ENCODE measurements at regions of chr3 and their contacts with region 1.

Region 1: GRCh38 chr3:189967254-189967865 is 153.3 kb downstream of the P3H2 start:
- DNase-seq: peak; percentile 85
- ATAC-seq: peak; percentile 58
- H3K4me3 ChIP-seq: no peak overlapping the region
- H3K27ac ChIP-seq: no peak overlapping the region
- H3K4me1 ChIP-seq: no peaks in the 10 kb centered on the region
- H3K27me3 ChIP-seq: no peaks in the 10 kb centered on the region
- CTCF ChIP-seq: peak; percentile 89

Region 2: GRCh38 chr3:189702066-189702646 is 265.2 kb before region 1 on chr3:
- CTCF ChIA-PET with region 1: no interaction called
- POLR2A ChIA-PET with region 1: no interaction called
- intact Hi-C with region 1: no loop called
- DNase-seq: no peak
- ATAC-seq: no peak
- H3K4me3 ChIP-seq: no peak overlapping the region
- H3K27ac ChIP-seq: no peak overlapping the region
- H3K4me1 ChIP-seq: 0 out of 2 replicates have a peak, but pooled peaks cover 3% of the 10 kb centered on the region
- H3K27me3 ChIP-seq: no peaks in the 10 kb centered on the region
- CTCF ChIP-seq: no peak

Region 3: DNA sequence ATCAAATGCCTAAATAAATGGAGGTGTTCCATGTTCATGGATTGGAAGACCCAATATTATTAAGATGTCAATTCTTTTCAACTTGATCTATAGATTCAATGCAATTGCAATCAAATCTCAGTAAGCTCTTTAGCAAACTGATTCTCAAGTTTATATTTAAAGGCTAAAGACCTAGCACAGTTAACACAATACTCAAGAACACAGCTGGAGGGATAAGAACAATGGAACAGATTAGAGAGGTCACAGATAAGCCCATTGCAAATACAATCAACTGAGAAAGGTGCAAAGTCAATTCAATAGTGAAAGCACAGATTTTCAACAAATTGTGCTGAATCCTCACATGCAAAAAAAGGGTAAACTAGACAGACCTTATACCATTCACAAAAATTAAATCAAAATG is 45.6 kb before region 1 on chr3:
- CTCF ChIA-PET with region 1: no interaction called
- POLR2A ChIA-PET with region 1: no interaction called
- intact Hi-C with region 1: no loop called
- DNase-seq: no peak
- ATAC-seq: no peak
- H3K4me3 ChIP-seq: no peak overlapping the region
- H3K27ac ChIP-seq: no peak overlapping the region
- H3K4me1 ChIP-seq: peaks cover 7% of the 10 kb centered on the region
- H3K27me3 ChIP-seq: no peaks in the 10 kb centered on the region
- CTCF ChIP-seq: no peak

Region 4: GRCh38 chr3:189947948-189948723 is 19.2 kb before region 1 on chr3:
- CTCF ChIA-PET with region 1: no interaction called
- POLR2A ChIA-PET with region 1: no interaction called
- intact Hi-C with region 1: no loop called
- DNase-seq: peak; percentile 86
- ATAC-seq: peak; percentile 50
- H3K4me3 ChIP-seq: no peak overlapping the region
- H3K27ac ChIP-seq: peak overlapping the region; percentile 34; the same call in 1 of the 2 replicates
- H3K4me1 ChIP-seq: peaks cover 37% of the 10 kb centered on the region
- H3K27me3 ChIP-seq: no peaks in the 10 kb centered on the region
- CTCF ChIP-seq: peak; percentile 93

Region 5: DNA sequence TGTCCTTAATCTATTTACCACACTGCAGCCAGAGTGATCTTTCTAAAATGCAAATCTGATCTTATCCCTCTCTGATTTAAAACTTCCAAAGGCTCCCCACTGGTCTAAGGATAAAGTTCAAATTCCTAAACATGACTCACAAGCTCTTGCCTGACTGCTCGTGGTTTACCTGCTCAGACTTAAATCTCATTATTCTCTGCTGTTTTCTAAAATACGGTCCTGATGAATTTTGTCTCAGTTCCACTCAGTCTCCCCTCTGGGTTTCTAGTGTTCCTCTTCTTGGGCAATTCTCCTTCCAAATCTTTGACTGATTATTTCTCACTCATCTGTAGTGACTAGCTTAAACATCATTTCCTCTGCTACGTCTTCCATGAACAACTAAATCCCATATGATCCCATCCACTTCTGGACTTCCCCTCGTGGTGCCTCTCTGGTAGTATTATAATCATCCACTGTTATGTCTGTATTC is 45.0 kb after region 1 on chr3:
- CTCF ChIA-PET with region 1: interaction called, 3 read pairs
- POLR2A ChIA-PET with region 1: no interaction called
- intact Hi-C with region 1: loop called (anchors 1 kb)
- DNase-seq: peak; percentile 86
- ATAC-seq: peak; percentile 84
- H3K4me3 ChIP-seq: peak overlapping the region; percentile 67
- H3K27ac ChIP-seq: peak overlapping the region; percentile 91
- H3K4me1 ChIP-seq: peaks cover 42% of the 10 kb centered on the region
- H3K27me3 ChIP-seq: no peaks in the 10 kb centered on the region
- CTCF ChIP-seq: no peak

Region 6: DNA sequence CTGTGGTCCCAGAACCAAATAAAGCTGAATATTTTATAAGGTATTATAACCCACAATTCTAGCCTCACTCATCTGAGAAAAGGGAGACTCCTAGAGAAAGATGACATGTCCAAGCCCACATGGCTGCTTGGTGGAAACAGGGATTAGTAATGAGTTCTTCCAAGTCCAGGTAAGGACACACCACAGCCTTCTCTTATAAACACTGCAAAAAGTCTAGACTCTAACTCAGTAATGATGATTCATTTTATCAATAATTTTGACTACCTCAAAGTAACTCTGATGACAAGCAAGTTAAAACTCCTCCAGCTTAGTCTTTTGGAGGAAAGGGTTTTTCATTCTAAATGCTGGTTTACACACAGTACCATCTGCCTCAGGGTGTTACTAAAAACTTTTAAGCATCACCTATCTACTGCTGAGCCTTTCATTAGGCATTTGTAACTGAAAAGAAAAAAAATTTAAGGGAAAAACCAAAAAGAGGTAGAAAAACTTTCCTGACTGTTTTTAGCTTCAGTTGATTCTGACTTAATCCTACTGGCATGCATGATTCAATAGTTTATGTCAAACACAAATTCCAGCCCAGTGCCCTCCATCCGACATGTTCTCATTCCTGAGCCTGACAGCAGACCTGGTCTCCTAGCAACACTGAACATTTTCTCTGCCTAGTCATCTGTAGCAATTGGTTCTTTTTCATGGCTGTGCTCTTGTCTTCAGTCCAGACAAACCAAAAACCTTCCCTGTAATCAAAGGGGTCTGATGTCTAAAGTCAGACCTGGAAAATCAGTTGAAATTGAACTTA is 109.4 kb after region 1 on chr3:
- CTCF ChIA-PET with region 1: no interaction called
- POLR2A ChIA-PET with region 1: no interaction called
- intact Hi-C with region 1: loop called (anchors 1 kb)
- DNase-seq: peak; percentile 90
- ATAC-seq: peak; percentile 97
- H3K4me3 ChIP-seq: peak overlapping the region; percentile 26; the same call in 1 of the 2 replicates
- H3K27ac ChIP-seq: peak overlapping the region; percentile 68
- H3K4me1 ChIP-seq: peaks cover 24% of the 10 kb centered on the region
- H3K27me3 ChIP-seq: no peaks in the 10 kb centered on the region
- CTCF ChIP-seq: no peak

Region 7: DNA sequence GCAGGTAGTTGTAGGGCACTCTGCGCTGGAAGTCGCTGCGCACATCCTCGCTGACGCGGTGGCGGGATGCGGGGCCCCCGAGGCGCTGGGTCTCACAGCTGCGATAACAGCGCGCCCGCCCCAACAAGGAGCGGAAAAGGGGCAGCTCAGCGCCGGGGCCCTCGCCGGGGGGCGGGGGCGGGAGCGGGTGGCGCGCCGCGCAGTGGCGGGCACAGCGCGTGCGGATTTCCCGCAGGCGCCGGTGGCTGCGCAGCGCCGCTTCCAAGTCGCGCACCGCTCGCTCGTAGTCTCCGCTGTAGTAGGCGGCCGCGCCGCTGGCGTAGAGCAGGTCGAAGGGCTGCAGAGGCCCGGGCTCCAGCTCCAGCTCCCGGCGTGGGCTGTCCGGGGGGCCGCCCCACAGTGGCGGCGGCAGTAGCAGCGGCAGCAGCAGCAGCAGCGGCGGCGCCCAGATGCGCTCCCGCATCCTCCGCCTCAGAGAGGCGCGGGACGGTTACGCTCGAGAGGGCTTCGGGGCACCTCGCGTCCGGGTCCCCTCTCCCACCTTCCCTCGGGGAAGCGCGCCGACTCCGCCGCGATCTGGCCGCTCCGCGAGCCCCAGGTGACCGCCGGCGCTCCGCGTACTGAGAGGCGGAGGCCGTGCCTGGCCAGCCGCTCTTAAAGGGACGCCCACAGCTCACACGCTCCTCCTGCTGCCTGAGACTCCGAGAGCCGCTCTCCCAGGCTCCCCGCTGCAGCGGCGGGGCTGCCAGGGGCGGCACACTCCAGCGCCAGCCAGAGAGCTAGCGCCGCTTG is 153.1 kb after region 1 on chr3 and contains the start of gene P3H2:
- CTCF ChIA-PET with region 1: interaction called, 4 read pairs
- POLR2A ChIA-PET with region 1: no interaction called
- intact Hi-C with region 1: loop called (anchors 2 kb)
- DNase-seq: peak; percentile 92
- ATAC-seq: peak; percentile 99
- H3K4me3 ChIP-seq: peak within 1 kb of the TSS; percentile 89
- H3K27ac ChIP-seq: no peak within 1 kb of the TSS
- H3K4me1 ChIP-seq: peaks cover 4% of the 10 kb centered on the region
- H3K27me3 ChIP-seq: no peaks in the 10 kb centered on the region
- CTCF ChIP-seq: peak; percentile 64
- total RNA-seq, gene P3H2: 4.5 and 11.4 TPM in 2 replicates

Region 8: GRCh38 chr3:190205739-190206138 is 238.4 kb after region 1 on chr3:
- CTCF ChIA-PET with region 1: no interaction called
- POLR2A ChIA-PET with region 1: no interaction called
- intact Hi-C with region 1: loop called (anchors 1 kb)
- DNase-seq: peak; percentile 53
- ATAC-seq: no peak; the same call in 1 of the 2 replicates
- H3K4me3 ChIP-seq: no peak overlapping the region
- H3K27ac ChIP-seq: no peak overlapping the region
- H3K4me1 ChIP-seq: peaks cover 9% of the 10 kb centered on the region; the same call in 1 of the 2 replicates
- H3K27me3 ChIP-seq: no peaks in the 10 kb centered on the region
- CTCF ChIP-seq: no peak

Measured in PC-3 (cell line).